Mammary epithelial cell (primary cell): ENCODE measurements at regions of chr2 and their contacts with region 1.

Region 1: DNA sequence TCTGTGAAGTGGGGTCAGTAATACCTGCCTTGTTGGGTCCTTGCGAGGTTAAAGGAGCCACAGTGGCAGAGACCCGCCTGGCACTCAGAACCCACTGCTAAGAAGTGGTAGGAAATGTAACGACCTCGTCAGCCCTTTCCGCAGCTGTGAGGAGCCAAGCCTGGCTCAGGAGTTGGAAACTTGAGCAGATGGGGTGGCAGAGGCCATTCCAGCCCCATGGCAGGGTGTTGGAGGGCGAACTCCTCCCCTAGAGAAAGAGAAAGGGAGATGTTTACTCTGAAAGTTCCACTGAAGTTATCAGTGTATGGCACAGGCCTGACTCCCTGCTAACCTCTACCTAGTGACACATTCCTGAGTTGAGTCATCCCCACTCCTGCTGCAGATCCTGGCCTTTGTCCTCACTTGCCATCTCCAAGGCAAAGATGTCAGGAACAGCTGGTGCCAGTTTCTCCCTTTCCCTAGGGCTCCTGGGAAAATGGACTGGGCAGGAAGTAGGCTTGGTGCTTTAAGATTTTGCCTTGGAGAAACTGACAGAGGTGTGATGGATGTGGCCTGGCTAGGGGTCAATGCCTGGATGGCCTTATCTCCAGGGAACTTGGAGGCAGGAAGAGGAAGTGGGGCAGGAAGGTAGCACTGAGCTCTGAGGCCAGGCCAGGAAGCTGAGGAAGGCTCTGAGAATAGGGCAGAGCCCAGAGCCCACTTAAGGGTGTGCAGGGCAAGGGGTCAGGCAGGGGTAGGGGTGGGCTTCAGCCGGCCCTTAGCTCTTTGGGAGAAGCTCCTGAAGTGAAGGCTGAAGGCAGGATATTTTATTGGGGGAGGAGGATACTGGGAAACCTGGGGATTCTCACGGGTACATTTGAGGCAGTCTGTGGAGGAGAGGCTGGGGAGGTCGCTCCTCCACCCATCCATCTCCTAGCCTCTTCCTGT is 889 bp downstream of the VAMP5 start:
- DNase-seq: peak; percentile 72
- H3K4me3 ChIP-seq: no peak overlapping the region
- H3K27ac ChIP-seq: no peak overlapping the region
- H3K4me1 ChIP-seq: peaks cover 24% of the 10 kb centered on the region
- H3K27me3 ChIP-seq: no peaks in the 10 kb centered on the region
- CTCF ChIP-seq: no peak

Region 2: DNA sequence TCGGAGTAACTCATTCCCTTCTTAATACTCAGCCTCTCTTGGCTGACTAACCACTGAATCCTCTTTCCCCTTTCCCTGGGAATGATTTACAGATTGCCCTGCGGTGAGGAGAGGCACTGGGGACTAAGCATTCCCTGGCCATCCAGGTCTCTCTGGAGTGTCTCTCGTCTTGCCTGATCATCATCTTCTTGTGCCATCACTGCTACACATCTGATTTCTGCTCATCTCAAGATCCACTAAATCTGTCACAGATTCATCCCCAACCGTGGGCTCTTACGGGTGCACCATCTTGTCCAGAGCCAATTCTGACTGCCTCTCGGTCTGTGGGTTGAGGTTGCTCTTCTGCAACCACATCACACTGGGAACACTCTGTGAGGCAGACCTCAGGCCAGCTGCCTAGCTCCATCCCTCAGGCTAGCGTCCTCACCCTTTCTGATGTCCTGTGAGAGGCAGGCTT is 70.9 kb after region 1 on chr2:
- CTCF ChIA-PET with region 1: no interaction called
- dilution Hi-C with region 1: loop called (anchors 5 kb)
- in situ Hi-C with region 1: no loop called
- intact Hi-C with region 1: no loop called
- DNase-seq: no peak
- H3K4me3 ChIP-seq: no peak overlapping the region
- H3K27ac ChIP-seq: no peak overlapping the region
- H3K4me1 ChIP-seq: no peaks in the 10 kb centered on the region
- H3K27me3 ChIP-seq: no peaks in the 10 kb centered on the region
- CTCF ChIP-seq: no peak

Region 3: GRCh38 chr2:86301711-86302202 is 716.6 kb after region 1 on chr2:
- CTCF ChIA-PET with region 1: no interaction called
- dilution Hi-C with region 1: no loop called
- in situ Hi-C with region 1: no loop called
- intact Hi-C with region 1: no loop called
- DNase-seq: no peak
- H3K4me3 ChIP-seq: no peak overlapping the region
- H3K27ac ChIP-seq: no peak overlapping the region
- H3K4me1 ChIP-seq: no peaks in the 10 kb centered on the region
- H3K27me3 ChIP-seq: no peaks in the 10 kb centered on the region
- CTCF ChIP-seq: no peak